SK-N-SH (cell line): ENCODE measurements at regions of chr4 and their contacts with region 1.

Region 1: DNA sequence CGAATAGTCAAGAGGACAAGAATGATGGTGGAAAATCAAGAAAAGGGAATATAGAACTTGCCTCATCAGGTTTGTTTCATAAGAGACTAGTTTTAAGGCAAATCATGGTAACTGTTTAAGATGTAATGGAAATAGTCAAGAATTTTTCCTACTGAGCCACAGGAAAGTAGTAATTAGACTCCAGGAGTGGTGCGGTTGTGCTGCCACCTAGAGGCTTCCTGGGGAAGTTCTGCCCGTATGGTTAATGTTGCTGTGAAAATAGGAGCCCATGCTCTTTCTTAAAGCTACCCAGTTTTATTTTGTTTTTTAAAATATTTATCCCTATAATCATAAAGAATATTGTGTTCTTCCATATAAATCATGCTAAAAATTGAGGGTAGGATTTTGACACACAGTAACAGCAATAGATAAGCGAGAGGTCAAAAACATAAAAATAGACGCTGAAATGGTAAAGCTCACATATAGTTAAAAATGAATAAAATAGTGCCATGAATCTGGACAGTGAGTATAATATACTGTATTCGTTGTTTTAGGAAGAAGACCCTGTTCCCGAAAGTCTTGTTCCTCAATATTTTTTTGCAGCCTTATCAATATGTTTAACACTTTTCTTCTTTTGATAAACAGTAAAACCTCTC is 87.0 kb downstream of the PHOX2B start:
- DNase-seq: peak; percentile 56
- H3K4me3 ChIP-seq: no peak overlapping the region; a peak in 1 of 4 replicates
- H3K27ac ChIP-seq: no peak overlapping the region
- H3K4me1 ChIP-seq: peaks cover 0 to 3% of the 10 kb centered on the region in 2 experiments; a peak in 1 of 4 replicates
- H3K27me3 ChIP-seq: no peaks in the 10 kb centered on the region
- CTCF ChIP-seq: peak; percentile 98
- EP300 ChIP-seq: no peak
- RAD21 ChIP-seq: peak; percentile 97

Region 2: DNA sequence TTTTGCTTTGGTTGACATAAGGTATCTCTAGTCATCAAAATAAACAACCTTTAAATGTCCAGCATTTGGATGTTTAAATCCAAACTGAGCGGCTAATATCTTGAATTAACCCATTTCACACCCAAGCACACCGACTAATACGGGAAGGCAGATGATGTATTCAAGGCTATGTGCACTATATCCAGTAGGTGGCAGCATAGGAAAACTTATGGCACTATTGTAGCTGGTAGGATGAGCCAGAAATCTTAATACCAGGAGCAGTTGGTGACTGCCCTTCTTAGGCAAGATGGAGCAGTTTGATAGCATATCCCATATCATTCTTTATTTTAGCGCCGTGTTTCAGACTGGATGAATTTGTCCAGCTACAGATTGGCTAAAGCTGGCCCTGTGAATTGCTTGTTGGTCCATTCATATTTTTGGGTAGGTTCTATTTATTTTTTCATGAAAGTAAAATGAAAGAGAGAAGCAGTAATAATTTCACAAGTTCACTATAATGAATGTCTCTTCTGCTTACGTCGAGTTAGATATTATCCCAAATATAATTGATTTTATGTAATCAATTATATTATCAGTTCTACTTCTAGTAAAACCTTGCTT is 380.4 kb before region 1 on chr4:
- CTCF ChIA-PET with region 1: interaction called, 92 read pairs
- POLR2A ChIA-PET with region 1: interaction called, 4 read pairs
- DNase-seq: peak; percentile 84
- H3K4me3 ChIP-seq: no peak overlapping the region
- H3K27ac ChIP-seq: no peak overlapping the region
- H3K4me1 ChIP-seq: no peaks in the 10 kb centered on the region; a peak in 1 of 4 replicates
- H3K27me3 ChIP-seq: no peaks in the 10 kb centered on the region
- CTCF ChIP-seq: peak; percentile 90
- EP300 ChIP-seq: no peak
- RAD21 ChIP-seq: peak; percentile 100

Region 3: GRCh38 chr4:41290486-41290885 is 371.1 kb before region 1 on chr4:
- CTCF ChIA-PET with region 1: interaction called, 10 read pairs
- POLR2A ChIA-PET with region 1: no interaction called
- DNase-seq: no peak
- H3K4me3 ChIP-seq: no peak overlapping the region
- H3K27ac ChIP-seq: no peak overlapping the region
- H3K4me1 ChIP-seq: no peaks in the 10 kb centered on the region
- H3K27me3 ChIP-seq: no peaks in the 10 kb centered on the region
- CTCF ChIP-seq: no peak
- EP300 ChIP-seq: no peak
- RAD21 ChIP-seq: no peak

Region 4: GRCh38 chr4:41339812-41340809 is 321.4 kb before region 1 on chr4:
- CTCF ChIA-PET with region 1: interaction called, 21 read pairs
- POLR2A ChIA-PET with region 1: no interaction called
- DNase-seq: peak; percentile 70
- H3K4me3 ChIP-seq: no peak overlapping the region
- H3K27ac ChIP-seq: peak overlapping the region; percentile 47 to 60
- H3K4me1 ChIP-seq: peaks cover 0 to 4% of the 10 kb centered on the region in 2 experiments; a peak in 2 of 4 replicates
- H3K27me3 ChIP-seq: no peaks in the 10 kb centered on the region
- CTCF ChIP-seq: peak; percentile 15; the same call in 1 of the 2 replicates
- EP300 ChIP-seq: peak in 1 of 2 experiments; percentile 32; a peak in 1 of 4 replicates
- RAD21 ChIP-seq: peak; percentile 83

Region 5: DNA sequence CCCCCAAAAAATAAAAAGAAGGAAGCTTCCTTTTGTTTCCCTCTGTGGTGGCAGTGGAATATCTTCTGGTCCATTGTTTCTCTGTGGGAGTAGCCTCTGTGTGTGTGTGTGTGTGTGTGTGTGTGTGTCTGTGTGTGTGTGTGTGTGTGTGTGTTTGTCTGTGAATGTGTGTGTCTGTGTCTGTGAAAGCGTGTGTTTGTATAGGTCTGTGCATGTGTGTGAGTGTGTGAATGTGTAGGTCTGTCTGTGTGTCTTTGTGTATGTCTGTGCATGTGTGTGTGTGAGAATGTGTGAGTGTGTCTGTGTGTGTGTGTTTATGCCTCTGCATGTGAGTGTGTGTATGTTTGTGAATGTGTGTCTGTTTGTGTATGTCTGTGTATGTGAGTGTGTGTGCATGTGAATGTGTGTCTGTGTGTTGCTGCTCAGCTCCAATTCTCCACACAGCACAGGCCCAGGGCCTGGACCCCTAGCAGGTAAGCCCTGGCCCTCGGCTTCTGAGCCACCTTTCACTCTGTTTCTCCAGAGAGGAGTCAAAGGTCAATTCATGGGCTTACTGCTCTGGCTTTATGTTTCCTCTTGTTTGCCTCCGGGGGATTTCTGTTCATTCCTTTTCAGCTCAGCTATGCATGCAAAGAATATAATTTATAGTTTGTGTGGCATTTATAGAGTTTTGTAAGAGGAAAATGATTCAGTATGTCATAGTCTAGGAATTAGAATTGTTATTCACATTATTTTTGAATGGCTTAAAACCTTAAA is 315.1 kb before region 1 on chr4:
- CTCF ChIA-PET with region 1: interaction called, 21 read pairs
- POLR2A ChIA-PET with region 1: no interaction called
- DNase-seq: no peak
- H3K4me3 ChIP-seq: no peak overlapping the region
- H3K27ac ChIP-seq: no peak overlapping the region
- H3K4me1 ChIP-seq: no peaks in the 10 kb centered on the region
- H3K27me3 ChIP-seq: no peaks in the 10 kb centered on the region
- CTCF ChIP-seq: no peak
- EP300 ChIP-seq: no peak
- RAD21 ChIP-seq: no peak

Region 6: GRCh38 chr4:41360214-41360920 is 301.2 kb before region 1 on chr4:
- CTCF ChIA-PET with region 1: interaction called, 16 read pairs
- POLR2A ChIA-PET with region 1: no interaction called
- DNase-seq: peak; percentile 90
- H3K4me3 ChIP-seq: peak overlapping the region; percentile 62 to 65
- H3K27ac ChIP-seq: peak overlapping the region in 1 of 2 experiments; percentile 97; a peak in 2 of 4 replicates
- H3K4me1 ChIP-seq: peaks cover 0 to 39% of the 10 kb centered on the region in 2 experiments; a peak in 2 of 4 replicates
- H3K27me3 ChIP-seq: peaks cover 23% of the 10 kb centered on the region; the same call in 1 of the 2 replicates
- CTCF ChIP-seq: no peak
- EP300 ChIP-seq: no peak
- RAD21 ChIP-seq: no peak

Region 7: GRCh38 chr4:41644288-41644914 is 17.2 kb before region 1 on chr4:
- CTCF ChIA-PET with region 1: interaction called, 19 read pairs
- POLR2A ChIA-PET with region 1: interaction called, 4 read pairs
- DNase-seq: peak; percentile 75
- H3K4me3 ChIP-seq: peak overlapping the region in 1 of 2 experiments; percentile 46; a peak in 1 of 4 replicates
- H3K27ac ChIP-seq: no peak overlapping the region
- H3K4me1 ChIP-seq: peaks cover 0 to 13% of the 10 kb centered on the region in 2 experiments; a peak in 1 of 4 replicates
- H3K27me3 ChIP-seq: no peaks in the 10 kb centered on the region
- CTCF ChIP-seq: peak; percentile 47
- EP300 ChIP-seq: no peak
- RAD21 ChIP-seq: peak; percentile 65

Region 8: GRCh38 chr4:41832961-41833360 is 171.4 kb after region 1 on chr4:
- CTCF ChIA-PET with region 1: no interaction called
- POLR2A ChIA-PET with region 1: no interaction called
- DNase-seq: no peak
- H3K4me3 ChIP-seq: no peak overlapping the region
- H3K27ac ChIP-seq: peak overlapping the region in 1 of 2 experiments; percentile 88; a peak in 2 of 4 replicates
- H3K4me1 ChIP-seq: peaks cover 0 to 11% of the 10 kb centered on the region in 2 experiments; a peak in 2 of 4 replicates
- H3K27me3 ChIP-seq: no peaks in the 10 kb centered on the region
- CTCF ChIP-seq: no peak
- EP300 ChIP-seq: no peak
- RAD21 ChIP-seq: no peak

Region 9: DNA sequence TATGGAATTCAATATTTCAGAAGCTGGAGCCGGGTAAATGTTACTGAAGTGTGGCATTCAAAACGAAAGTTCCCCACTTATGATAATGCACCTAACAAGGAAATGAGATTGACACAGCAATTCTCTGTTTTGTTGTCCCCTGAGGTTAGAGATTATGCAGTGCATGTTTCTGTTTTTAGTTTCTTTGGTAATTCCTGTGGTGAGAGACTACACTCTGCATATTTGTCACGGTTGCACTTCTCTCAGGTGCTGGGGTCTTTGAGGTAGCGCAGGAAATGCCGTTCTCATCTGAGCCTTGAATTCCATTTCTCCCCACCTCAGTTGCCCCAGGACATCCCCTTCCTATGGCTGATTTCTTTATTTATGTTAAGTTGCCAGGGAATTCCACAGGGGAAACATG is 506.1 kb after region 1 on chr4:
- CTCF ChIA-PET with region 1: no interaction called
- POLR2A ChIA-PET with region 1: no interaction called
- DNase-seq: no peak
- H3K4me3 ChIP-seq: no peak overlapping the region
- H3K27ac ChIP-seq: no peak overlapping the region
- H3K4me1 ChIP-seq: no peaks in the 10 kb centered on the region
- H3K27me3 ChIP-seq: no peaks in the 10 kb centered on the region
- CTCF ChIP-seq: no peak
- EP300 ChIP-seq: no peak
- RAD21 ChIP-seq: no peak